ENCODE measurements at regions of chr4 and their contacts with region 1.

Region 1: DNA sequence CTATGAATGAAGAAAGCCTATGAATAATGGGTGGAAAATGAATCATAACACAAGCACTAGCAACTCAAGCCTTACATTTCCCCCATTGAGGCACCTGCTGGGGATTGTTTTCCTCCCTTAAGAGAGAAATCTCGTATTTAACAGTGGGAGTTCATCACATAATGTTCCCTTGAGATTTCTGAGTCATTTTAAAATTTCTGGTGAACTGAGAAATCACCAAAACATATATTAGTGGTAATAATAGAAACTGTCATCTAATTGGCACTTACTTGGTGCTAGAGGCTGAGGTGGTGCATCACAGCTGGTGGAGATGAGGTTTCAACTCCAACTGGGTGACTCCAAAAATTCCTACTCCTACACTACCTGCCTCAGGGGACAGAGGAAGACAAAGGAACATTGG is 561.3 kb upstream of the LCORL start:
- DNase-seq: no peak
- ATAC-seq: no peak
- H3K4me3 ChIP-seq: no peak overlapping the region
- H3K27ac ChIP-seq: no peak overlapping the region
- H3K4me1 ChIP-seq: no peaks in the 10 kb centered on the region
- H3K27me3 ChIP-seq: no peaks in the 10 kb centered on the region

Region 2: GRCh38 chr4:17823871-17824669 is 758.8 kb before region 1 on chr4:
- intact Hi-C with region 1: loop called in 1 of 2 experiments (anchors 10 kb)
- DNase-seq: no peak
- ATAC-seq: no peak
- H3K4me3 ChIP-seq: no peak overlapping the region
- H3K27ac ChIP-seq: no peak overlapping the region
- H3K4me1 ChIP-seq: no peaks in the 10 kb centered on the region
- H3K27me3 ChIP-seq: no peaks in the 10 kb centered on the region

Region 3: GRCh38 chr4:18695733-18696527 is 113.1 kb after region 1 on chr4:
- intact Hi-C with region 1: no loop called
- DNase-seq: no peak
- ATAC-seq: no peak
- H3K4me3 ChIP-seq: no peak overlapping the region
- H3K27ac ChIP-seq: no peak overlapping the region
- H3K4me1 ChIP-seq: no peaks in the 10 kb centered on the region
- H3K27me3 ChIP-seq: no peaks in the 10 kb centered on the region

Region 4: DNA sequence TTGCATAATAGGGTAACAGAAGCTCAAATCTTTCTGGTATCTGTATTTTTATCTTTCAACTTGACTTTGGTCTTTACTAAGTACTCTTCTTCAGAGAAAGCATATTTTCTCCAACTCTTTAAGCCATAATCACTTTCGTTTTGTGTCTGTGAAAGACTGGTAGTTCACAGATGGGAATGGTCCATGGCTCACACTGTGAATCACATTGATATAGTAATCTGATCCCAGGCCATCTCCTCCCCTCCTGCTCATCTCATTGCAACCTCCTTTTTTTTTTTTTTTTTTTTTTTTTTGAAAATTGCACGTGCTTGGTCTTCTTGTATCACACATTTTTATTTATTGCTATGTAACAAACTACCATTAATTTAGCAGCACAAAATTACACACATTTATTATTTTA is 974.3 kb after region 1 on chr4:
- intact Hi-C with region 1: no loop called
- DNase-seq: no peak
- ATAC-seq: no peak
- H3K4me3 ChIP-seq: no peak overlapping the region
- H3K27ac ChIP-seq: no peak overlapping the region
- H3K4me1 ChIP-seq: no peaks in the 10 kb centered on the region
- H3K27me3 ChIP-seq: no peaks in the 10 kb centered on the region